ENCODE measurements at regions of chr18 and their contacts with region 1.

Region 1: DNA sequence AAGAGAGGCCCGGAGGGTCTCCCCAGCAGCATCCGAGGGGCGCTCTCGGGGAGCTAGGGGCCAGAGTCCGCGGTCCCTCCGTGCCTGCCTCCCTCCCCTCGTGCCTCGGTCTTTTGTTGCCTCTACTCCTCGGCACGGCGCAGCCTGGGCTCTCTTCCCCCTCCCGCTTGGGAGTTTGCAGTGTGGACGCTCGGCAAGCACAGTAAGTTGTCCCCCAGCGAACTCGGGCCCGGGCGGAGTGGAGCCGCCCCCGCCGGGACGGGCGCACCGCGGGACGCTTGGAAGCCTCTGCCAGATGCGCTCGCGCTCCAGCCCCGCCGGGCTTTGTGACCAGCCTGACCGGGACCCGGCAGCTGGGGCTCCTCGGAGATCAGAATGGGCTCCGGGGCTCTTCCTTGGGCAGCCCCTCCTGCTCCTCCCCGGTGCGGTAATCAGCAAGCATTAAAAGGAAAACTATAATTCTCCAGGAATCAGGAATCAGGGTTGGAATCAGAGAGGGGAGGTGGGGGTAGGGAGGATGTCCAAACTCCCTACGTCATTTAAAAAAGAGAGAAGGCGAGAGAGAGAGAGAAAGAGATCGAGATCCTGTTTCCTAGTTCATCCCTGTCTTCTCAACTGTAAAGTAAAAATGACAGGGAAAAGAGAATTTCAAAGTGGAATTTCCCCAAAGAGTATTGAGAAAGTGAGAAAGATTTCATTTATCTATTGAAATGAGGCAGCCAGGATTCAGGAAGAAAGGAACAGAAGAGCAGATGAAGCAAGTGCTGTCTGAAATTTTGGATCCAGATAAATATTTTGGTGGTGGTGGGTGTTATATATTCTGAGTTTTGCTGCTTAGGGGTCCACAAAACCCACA is 791 bp upstream of the TMEM200C start:
- DNase-seq: peak in 1 of 2 experiments; percentile 15
- H3K4me3 ChIP-seq: peak overlapping the region; percentile 12
- H3K4me3 Mint-ChIP-seq: peak overlapping the region; percentile 67
- H3K27ac Mint-ChIP-seq: no peak overlapping the region
- H3K4me1 ChIP-seq: peaks cover 11% of the 10 kb centered on the region
- H3K4me1 Mint-ChIP-seq: peaks cover 11% of the 10 kb centered on the region
- H3K27me3 ChIP-seq: peaks cover 7% of the 10 kb centered on the region; the same call in 1 of the 2 replicates
- H3K27me3 Mint-ChIP-seq: peaks cover 34% of the 10 kb centered on the region
- CTCF ChIP-seq: no peak

Region 2: DNA sequence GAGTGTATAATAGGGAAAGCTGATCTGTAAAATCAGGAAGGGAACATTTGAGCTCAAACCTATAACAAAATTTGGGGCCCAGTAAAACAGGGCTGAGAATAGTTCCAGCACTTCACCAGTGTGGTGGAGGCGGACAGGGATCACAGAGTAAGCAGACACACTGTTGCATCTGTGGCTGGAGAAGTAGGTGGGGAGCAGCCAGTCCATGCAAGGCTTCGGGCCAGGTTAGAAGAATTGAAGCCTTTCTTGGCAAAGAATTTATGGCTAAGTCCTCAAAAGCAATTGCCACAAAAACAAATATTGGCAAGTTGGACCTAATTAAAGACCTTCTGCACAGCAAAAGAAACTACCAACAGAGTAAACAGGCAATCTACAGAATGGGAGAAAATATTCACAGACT is 506.8 kb before region 1 on chr18:
- CTCF ChIA-PET with region 1: no interaction called
- POLR2A ChIA-PET with region 1: no interaction called
- intact Hi-C with region 1: no loop called
- DNase-seq: no peak
- H3K4me3 ChIP-seq: no peak overlapping the region
- H3K4me3 Mint-ChIP-seq: no peak overlapping the region
- H3K27ac Mint-ChIP-seq: no peak overlapping the region
- H3K4me1 ChIP-seq: no peaks in the 10 kb centered on the region
- H3K4me1 Mint-ChIP-seq: no peaks in the 10 kb centered on the region
- H3K27me3 ChIP-seq: no peaks in the 10 kb centered on the region
- H3K27me3 Mint-ChIP-seq: no peaks in the 10 kb centered on the region
- CTCF ChIP-seq: no peak

Region 3: GRCh38 chr18:5851998-5852397 is 44.1 kb before region 1 on chr18:
- CTCF ChIA-PET with region 1: no interaction called
- POLR2A ChIA-PET with region 1: no interaction called
- intact Hi-C with region 1: no loop called
- DNase-seq: no peak
- H3K4me3 ChIP-seq: no peak overlapping the region
- H3K4me3 Mint-ChIP-seq: no peak overlapping the region
- H3K27ac Mint-ChIP-seq: no peak overlapping the region
- H3K4me1 ChIP-seq: no peaks in the 10 kb centered on the region
- H3K4me1 Mint-ChIP-seq: no peaks in the 10 kb centered on the region
- H3K27me3 ChIP-seq: no peaks in the 10 kb centered on the region
- H3K27me3 Mint-ChIP-seq: peaks cover 11% of the 10 kb centered on the region
- CTCF ChIP-seq: peak in 1 of 2 experiments; percentile 35

Region 4: GRCh38 chr18:5939801-5940667 is 43.9 kb after region 1 on chr18:
- CTCF ChIA-PET with region 1: no interaction called
- POLR2A ChIA-PET with region 1: no interaction called
- intact Hi-C with region 1: no loop called
- DNase-seq: no peak
- H3K4me3 ChIP-seq: no peak overlapping the region
- H3K4me3 Mint-ChIP-seq: no peak overlapping the region
- H3K27ac Mint-ChIP-seq: no peak overlapping the region
- H3K4me1 ChIP-seq: no peaks in the 10 kb centered on the region
- H3K4me1 Mint-ChIP-seq: no peaks in the 10 kb centered on the region
- H3K27me3 ChIP-seq: no peaks in the 10 kb centered on the region
- H3K27me3 Mint-ChIP-seq: peaks cover 17% of the 10 kb centered on the region
- CTCF ChIP-seq: no peak

Region 5: GRCh38 chr18:5951515-5952091 is 55.5 kb after region 1 on chr18:
- CTCF ChIA-PET with region 1: no interaction called
- POLR2A ChIA-PET with region 1: no interaction called
- intact Hi-C with region 1: loop called (anchors 5 kb)
- DNase-seq: no peak
- H3K4me3 ChIP-seq: no peak overlapping the region
- H3K4me3 Mint-ChIP-seq: no peak overlapping the region
- H3K27ac Mint-ChIP-seq: no peak overlapping the region
- H3K4me1 ChIP-seq: no peaks in the 10 kb centered on the region
- H3K4me1 Mint-ChIP-seq: no peaks in the 10 kb centered on the region
- H3K27me3 ChIP-seq: no peaks in the 10 kb centered on the region
- H3K27me3 Mint-ChIP-seq: peaks cover 10% of the 10 kb centered on the region
- CTCF ChIP-seq: no peak

Measured in Caco-2 (cell line).